CD8-positive, alpha-beta memory T cell (primary cell): ENCODE measurements at regions of chr17 and their contacts with region 1.

Region 1: GRCh38 chr17:40075201-40075941 is 12.6 kb downstream of the THRA start:
- DNase-seq: peak; percentile 54 to 79 (median 56)
- H3K4me3 ChIP-seq: no peak overlapping the region
- H3K4me3 Mint-ChIP-seq: peak overlapping the region in 1 of 7 donors; percentile 73
- H3K27ac ChIP-seq: peak overlapping the region; percentile 6
- H3K27ac Mint-ChIP-seq: peak overlapping the region in 5 of 8 donors; percentile 62 to 87 (median 79)
- H3K4me1 ChIP-seq: peaks cover 38% of the 10 kb centered on the region
- H3K4me1 Mint-ChIP-seq: peaks cover 30 to 53% (median 38%) of the 10 kb centered on the region in 3 donors
- H3K27me3 ChIP-seq: no peaks in the 10 kb centered on the region
- H3K27me3 Mint-ChIP-seq: peaks cover 0 to 3% of the 10 kb centered on the region in 2 donors

Region 2: DNA sequence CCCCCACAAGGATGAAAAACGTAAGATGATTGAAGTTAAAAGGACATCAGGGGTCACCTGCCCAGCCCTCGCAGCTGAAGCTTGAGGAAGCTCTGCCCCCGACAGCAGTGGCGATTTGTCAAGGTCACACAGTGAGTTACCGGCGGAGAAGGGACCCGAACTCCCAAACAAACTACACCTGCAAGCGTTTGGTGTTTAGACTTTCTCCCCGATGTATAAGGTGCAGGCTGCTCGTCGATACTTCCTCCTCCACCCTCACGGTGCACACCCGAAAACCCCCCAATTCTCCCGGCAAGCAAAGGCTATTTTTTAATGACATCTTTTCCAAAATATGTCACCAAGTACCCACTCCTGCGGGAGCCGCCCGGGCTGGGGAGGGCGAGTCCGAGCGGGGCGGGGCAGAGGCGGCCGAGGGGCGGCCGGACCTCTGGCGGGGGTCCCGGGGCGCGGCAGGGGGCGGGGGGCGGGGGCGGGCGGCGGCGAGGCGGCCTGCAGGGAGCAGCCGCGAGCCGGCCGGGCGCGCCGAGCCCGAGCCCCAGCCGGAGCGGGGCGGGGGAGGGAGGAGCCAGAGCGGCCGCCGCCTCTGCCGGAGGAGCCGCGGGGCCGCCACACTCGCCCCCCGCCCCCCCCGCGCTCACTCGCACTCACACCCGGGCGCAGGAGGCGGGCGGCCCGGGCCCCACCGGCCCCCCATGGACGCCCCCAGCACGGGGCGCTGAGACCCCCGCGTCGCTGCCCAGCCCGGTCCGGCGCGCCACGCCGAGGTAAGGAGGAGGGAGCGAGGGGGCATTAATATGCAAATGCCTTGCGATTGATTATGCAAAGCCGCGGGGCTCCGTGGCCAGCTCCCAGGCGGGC is 12.8 kb before region 1 on chr17 and contains the start of gene THRA:
- CTCF ChIA-PET with region 1: interaction called, 96 read pairs
- POLR2A ChIA-PET with region 1: interaction called, 5 read pairs
- DNase-seq: peak; percentile 64 to 81 (median 70)
- H3K4me3 ChIP-seq: peak within 1 kb of the TSS; percentile 81
- H3K4me3 Mint-ChIP-seq: peak within 1 kb of the TSS; percentile 88 to 97 (median 91)
- H3K27ac ChIP-seq: peak within 1 kb of the TSS; percentile 73
- H3K27ac Mint-ChIP-seq: peak within 1 kb of the TSS; percentile 80 to 97 (median 90)
- H3K4me1 ChIP-seq: peaks cover 46% of the 10 kb centered on the region
- H3K4me1 Mint-ChIP-seq: peaks cover 37 to 49% (median 41%) of the 10 kb centered on the region in 3 donors
- H3K27me3 ChIP-seq: no peaks in the 10 kb centered on the region
- H3K27me3 Mint-ChIP-seq: peaks cover 0 to 2% of the 10 kb centered on the region in 2 donors
- total RNA-seq, gene THRA: 12.6 to 13.2 TPM

Region 3: DNA sequence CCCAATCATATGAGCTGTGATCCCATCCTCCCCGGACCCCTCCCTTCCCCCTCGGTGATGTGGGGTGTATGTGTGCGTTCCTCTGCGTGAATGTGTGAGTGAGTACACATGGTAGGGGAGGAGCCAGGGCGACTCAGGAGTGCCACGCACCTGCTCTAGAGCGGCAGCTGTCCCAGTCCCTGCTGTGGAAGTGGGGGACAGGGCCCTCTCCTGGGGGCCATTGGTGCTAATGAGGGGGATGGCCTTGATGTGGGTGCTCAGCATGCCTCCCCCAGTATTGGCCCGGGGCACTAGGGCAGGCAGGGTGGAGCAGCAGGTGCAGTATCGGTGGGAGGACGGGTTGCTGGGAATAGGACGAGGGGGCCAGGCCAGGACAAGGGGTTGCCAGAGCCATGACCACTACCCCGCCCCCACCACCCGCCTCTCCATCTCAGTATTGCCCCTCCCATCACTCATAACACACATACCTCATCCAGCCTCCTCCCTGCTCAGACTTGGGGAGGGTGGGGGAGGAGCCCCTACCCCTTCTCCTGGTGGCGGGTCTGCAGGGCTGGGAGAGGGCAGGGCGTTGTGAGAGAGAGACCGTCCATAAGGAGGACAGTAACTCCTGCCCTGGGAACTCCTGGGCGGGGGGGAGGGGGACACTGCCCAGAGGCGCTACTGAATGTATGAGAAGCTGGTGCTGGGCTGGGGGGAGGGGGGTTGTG is 16.5 kb after region 1 on chr17:
- CTCF ChIA-PET with region 1: interaction called, 19 read pairs
- POLR2A ChIA-PET with region 1: interaction called, 4 read pairs
- DNase-seq: no peak
- H3K4me3 ChIP-seq: no peak overlapping the region
- H3K4me3 Mint-ChIP-seq: no peak overlapping the region
- H3K27ac ChIP-seq: no peak overlapping the region
- H3K27ac Mint-ChIP-seq: no peak overlapping the region
- H3K4me1 ChIP-seq: peaks cover 31% of the 10 kb centered on the region
- H3K4me1 Mint-ChIP-seq: peaks cover 27 to 42% (median 39%) of the 10 kb centered on the region in 3 donors
- H3K27me3 ChIP-seq: no peaks in the 10 kb centered on the region
- H3K27me3 Mint-ChIP-seq: peaks cover 0 to 3% of the 10 kb centered on the region in 2 donors

Region 4: GRCh38 chr17:40121181-40122135 is 46.1 kb after region 1 on chr17 and contains the start of gene MSL1:
- CTCF ChIA-PET with region 1: interaction called, 14 read pairs
- POLR2A ChIA-PET with region 1: no interaction called
- DNase-seq: peak; percentile 84 to 90 (median 85)
- H3K4me3 ChIP-seq: peak within 1 kb of the TSS; percentile 93
- H3K4me3 Mint-ChIP-seq: peak within 1 kb of the TSS; percentile 83 to 96 (median 90)
- H3K27ac ChIP-seq: peak within 1 kb of the TSS; percentile 40
- H3K27ac Mint-ChIP-seq: peak within 1 kb of the TSS; percentile 74 to 96 (median 89)
- H3K4me1 ChIP-seq: peaks cover 32% of the 10 kb centered on the region
- H3K4me1 Mint-ChIP-seq: peaks cover 32 to 49% (median 36%) of the 10 kb centered on the region in 3 donors
- H3K27me3 ChIP-seq: no peaks in the 10 kb centered on the region
- H3K27me3 Mint-ChIP-seq: peaks cover 0 to 1% of the 10 kb centered on the region in 2 donors
- total RNA-seq, gene MSL1: 88.6 to 91.5 TPM

Region 5: DNA sequence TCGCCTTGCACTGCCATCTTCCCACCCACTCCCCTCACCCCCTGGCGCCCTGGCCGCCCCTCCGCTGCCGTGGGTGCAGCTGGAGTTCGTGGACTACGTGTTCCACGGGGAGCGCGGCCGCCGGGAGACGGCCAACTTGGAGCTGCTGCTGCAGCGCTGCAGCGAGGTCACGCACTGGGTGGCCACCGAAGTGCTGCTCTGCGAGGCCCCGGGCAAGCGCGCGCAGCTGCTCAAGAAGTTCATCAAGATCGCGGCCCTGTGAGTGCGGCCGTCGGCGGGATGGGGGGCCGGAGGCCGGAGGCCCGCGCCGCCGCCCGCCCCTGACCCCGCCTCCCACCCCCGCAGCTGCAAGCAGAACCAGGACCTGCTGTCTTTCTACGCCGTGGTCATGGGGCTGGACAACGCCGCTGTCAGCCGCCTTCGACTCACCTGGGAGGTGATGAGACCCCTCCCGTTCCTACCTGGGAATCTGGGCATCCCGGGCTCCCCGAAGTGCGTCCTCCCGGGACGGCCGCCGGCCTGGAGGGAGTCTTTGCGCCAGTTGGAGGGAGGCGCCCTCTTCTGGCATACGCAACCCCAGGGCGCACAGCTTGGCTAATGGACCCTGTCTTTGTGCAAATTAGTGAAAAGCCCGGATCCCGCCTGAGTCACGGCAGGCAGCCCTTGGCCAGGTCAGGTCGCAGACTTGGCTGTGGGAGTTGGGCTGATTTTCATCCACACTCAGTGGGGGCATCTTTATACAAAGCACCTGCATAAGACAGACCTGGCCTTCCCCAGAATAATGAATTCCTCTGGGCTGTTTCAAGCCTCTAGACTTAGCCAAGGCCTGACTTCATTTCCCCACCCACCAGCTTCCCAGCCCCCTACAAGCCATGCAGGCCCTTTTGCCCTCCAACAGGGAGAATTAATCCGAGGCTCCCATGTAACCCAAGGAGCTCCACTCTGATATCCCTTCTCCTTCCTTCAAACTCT is 116.2 kb after region 1 on chr17:
- CTCF ChIA-PET with region 1: interaction called, 15 read pairs
- POLR2A ChIA-PET with region 1: no interaction called
- DNase-seq: peak; percentile 46 to 75 (median 50)
- H3K4me3 ChIP-seq: peak overlapping the region; percentile 62
- H3K4me3 Mint-ChIP-seq: peak overlapping the region; percentile 84 to 97 (median 92)
- H3K27ac ChIP-seq: no peak overlapping the region
- H3K27ac Mint-ChIP-seq: peak overlapping the region in 2 of 8 donors; percentile 68 to 88
- H3K4me1 ChIP-seq: peaks cover 5% of the 10 kb centered on the region
- H3K4me1 Mint-ChIP-seq: peaks cover 5 to 9% (median 6%) of the 10 kb centered on the region in 3 donors
- H3K27me3 ChIP-seq: no peaks in the 10 kb centered on the region
- H3K27me3 Mint-ChIP-seq: peaks cover 0 to 1% of the 10 kb centered on the region in 2 donors